Ascending aorta (tissue), 2 donors: ENCODE measurements at regions of chr5 and their contacts with region 1.

Region 1: GRCh38 chr5:177113566-177114424 is 19.8 kb upstream of the NSD1 start:
- DNase-seq: peak in 1 of 2 donors; percentile 86
- H3K4me3 ChIP-seq: no peak overlapping the region
- H3K27ac ChIP-seq: no peak overlapping the region
- H3K4me1 ChIP-seq: peaks cover 0 to 3% of the 10 kb centered on the region in 2 donors
- H3K27me3 ChIP-seq: no peaks in the 10 kb centered on the region
- CTCF ChIP-seq: peak; percentile 94 to 100 (median 99)

Region 2: GRCh38 chr5:176658007-176658599 is 455.7 kb before region 1 on chr5:
- intact Hi-C with region 1: loop called (anchors 10 kb)
- DNase-seq: peak in 1 of 2 donors; percentile 86
- H3K4me3 ChIP-seq: no peak overlapping the region
- H3K27ac ChIP-seq: no peak overlapping the region
- H3K4me1 ChIP-seq: no peaks in the 10 kb centered on the region
- H3K27me3 ChIP-seq: no peaks in the 10 kb centered on the region
- CTCF ChIP-seq: peak; percentile 47 to 89 (median 75)

Region 3: DNA sequence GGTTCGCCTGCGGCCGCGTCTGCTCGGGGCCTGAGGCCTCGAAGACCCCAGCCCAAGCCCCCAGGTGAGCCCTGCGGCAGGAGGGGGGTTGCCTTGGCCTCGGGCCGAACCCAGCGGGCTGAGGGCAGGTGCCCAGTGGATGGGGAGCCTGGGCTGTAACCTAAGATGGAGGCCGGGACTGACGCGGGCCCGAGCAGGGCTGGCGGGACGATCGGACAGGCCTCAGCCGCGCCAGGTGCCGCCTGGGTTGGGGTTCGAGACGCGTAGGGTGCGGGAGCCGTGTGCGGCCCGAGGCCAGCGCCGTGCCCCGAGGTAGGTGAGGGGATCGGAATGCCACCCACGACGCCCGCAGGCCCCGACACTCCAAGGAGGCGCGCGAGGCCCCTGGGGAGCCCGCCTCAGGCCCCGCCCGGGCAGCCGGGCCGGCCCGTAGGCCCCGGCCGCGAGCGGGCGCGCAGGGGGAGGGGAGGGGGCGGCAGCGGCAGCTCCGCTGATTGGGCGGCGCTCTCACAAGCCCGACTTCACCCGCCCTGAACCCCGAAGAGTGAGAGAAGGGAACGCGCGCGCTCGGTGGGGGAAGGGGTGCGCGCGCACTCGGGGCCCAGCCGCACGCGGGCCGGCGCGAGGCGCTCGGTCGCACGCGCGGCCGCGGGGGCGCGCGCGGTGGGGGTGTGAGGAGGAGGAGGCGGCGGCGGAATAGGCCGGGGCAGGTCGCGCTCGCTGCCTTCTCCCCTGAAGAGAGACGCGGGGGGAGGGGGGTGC is 19.5 kb after region 1 on chr5 and contains the start of gene NSD1:
- intact Hi-C with region 1: loop called (anchors 1 kb)
- DNase-seq: peak; percentile 60 to 91
- H3K4me3 ChIP-seq: peak within 1 kb of the TSS; percentile 77 to 89
- H3K27ac ChIP-seq: peak within 1 kb of the TSS; percentile 87 to 95
- H3K4me1 ChIP-seq: peaks cover 9 to 36% of the 10 kb centered on the region in 2 donors
- H3K27me3 ChIP-seq: no peaks in the 10 kb centered on the region
- CTCF ChIP-seq: no peak
- total RNA-seq, gene NSD1: 22.7 TPM

Region 4: DNA sequence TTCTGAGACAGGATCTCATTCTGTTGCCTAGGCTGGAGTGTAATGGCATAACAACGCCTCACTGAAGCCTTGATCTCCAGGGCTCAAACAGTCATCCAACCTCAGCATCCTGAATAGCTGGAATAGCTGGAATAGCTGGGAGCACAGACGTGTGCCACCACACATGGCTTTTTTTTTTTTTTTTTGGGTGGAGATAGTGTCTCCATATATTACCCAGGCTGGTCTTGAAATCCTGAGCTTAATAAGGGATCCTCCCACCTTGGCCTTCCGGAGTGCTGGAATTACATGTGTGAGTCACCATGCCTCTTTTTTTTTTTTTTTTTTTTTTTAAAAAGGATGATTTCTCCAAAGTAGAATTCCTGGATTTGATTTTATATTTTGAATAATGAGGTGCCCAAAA is 80.5 kb after region 1 on chr5:
- intact Hi-C with region 1: loop called (anchors 5 kb)
- DNase-seq: no peak
- H3K4me3 ChIP-seq: no peak overlapping the region
- H3K27ac ChIP-seq: no peak overlapping the region
- H3K4me1 ChIP-seq: no peaks in the 10 kb centered on the region
- H3K27me3 ChIP-seq: no peaks in the 10 kb centered on the region
- CTCF ChIP-seq: no peak

Region 5: GRCh38 chr5:177249761-177250526 is 136.1 kb after region 1 on chr5:
- intact Hi-C with region 1: loop called (anchors 5 kb)
- DNase-seq: no peak
- H3K4me3 ChIP-seq: no peak overlapping the region
- H3K27ac ChIP-seq: no peak overlapping the region
- H3K4me1 ChIP-seq: no peaks in the 10 kb centered on the region
- H3K27me3 ChIP-seq: no peaks in the 10 kb centered on the region
- CTCF ChIP-seq: no peak

Region 6: GRCh38 chr5:177303121-177303924 is 189.5 kb after region 1 on chr5 and contains the starts of genes PRELID1 and RAB24:
- intact Hi-C with region 1: loop called (anchors 2 kb)
- DNase-seq: peak in 1 of 2 donors; percentile 94
- H3K4me3 ChIP-seq: peak within 1 kb of the TSS; percentile 72 to 90
- H3K27ac ChIP-seq: peak within 1 kb of the TSS; percentile 80 to 88
- H3K4me1 ChIP-seq: peaks cover 3 to 31% of the 10 kb centered on the region in 2 donors
- H3K27me3 ChIP-seq: no peaks in the 10 kb centered on the region
- CTCF ChIP-seq: peak in 2 of 3 experiments; percentile 30 to 43
- total RNA-seq, gene PRELID1: 376 TPM
- total RNA-seq, gene RAB24: 68.8 TPM

Region 7: DNA sequence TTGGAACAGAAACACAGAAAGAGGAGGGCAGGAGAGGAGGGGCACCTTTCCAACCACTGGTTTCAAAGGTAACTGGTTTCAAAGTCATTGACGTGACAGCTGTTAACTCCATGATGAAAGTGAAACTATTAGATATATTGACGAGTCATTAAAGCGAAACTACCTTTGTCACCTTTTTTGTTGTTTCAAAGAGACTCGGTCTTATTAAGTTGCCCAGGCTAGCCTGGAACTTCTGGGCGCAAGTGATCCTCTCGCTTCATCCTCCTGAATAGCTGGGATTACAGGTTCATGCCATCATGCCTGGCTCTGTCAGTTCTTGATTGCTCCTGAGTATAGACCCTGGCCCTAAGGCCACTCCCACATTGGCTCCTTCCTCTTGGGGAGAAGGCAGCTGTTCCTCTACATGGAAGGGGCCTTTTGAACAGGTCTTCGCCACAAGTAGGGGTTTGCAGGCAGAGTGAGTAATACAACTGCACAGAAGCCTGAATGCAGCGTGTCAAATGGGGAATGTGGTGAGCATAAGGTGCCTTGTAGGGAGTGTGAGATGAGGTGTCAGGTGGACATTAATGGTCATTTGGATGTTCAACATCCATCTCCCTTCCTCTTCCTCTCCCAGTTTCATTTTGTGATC is 298.9 kb after region 1 on chr5:
- intact Hi-C with region 1: no loop called
- DNase-seq: no peak
- H3K4me3 ChIP-seq: no peak overlapping the region
- H3K27ac ChIP-seq: no peak overlapping the region
- H3K4me1 ChIP-seq: no peaks in the 10 kb centered on the region
- H3K27me3 ChIP-seq: no peaks in the 10 kb centered on the region
- CTCF ChIP-seq: no peak

Region 8: DNA sequence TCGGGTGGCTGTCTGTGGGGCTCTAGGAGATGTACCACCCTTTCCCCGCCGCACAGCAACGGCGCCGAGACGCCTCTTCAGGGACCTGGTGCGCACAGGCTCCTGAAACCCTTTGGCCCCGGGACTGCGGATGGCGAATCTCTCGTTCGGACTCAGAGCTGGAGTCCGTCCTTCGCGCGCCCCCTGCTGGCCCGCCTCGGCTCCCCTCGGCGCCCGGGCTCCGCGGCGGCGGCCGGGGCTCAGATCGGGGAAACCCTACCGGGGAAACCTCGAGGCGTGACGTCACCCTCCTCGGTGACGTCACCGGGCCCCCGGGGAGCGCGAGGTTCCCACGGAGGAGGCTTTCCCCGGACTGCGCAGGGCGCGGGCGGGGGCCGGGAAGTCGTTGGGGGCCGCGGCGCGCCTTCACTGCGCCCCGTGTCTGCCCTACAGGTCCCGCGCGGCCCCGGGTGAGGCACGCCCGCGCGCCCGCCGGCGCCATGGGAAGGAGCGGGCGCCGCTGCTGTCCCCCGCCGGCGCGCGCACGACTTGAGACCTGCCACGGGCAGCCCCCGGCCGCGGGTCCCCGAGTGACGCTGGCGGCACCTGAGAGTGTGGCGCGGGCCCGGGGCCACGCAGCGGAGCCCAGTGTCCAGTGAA is 340.7 kb after region 1 on chr5:
- intact Hi-C with region 1: loop called (anchors 10 kb)
- DNase-seq: peak; percentile 62 to 97
- H3K4me3 ChIP-seq: peak overlapping the region; percentile 53 to 92
- H3K27ac ChIP-seq: peak overlapping the region; percentile 68 to 86
- H3K4me1 ChIP-seq: peaks cover 18 to 22% of the 10 kb centered on the region in 2 donors
- H3K27me3 ChIP-seq: no peaks in the 10 kb centered on the region
- CTCF ChIP-seq: peak; percentile 96 to 97 (median 96)